Cardiac septum (tissue), 1 donor: ENCODE measurements at regions of chr3 and their contacts with region 1.

Region 1: GRCh38 chr3:52154117-52155094 is at the start of gene POC1A:
- DNase-seq: peak; percentile 97
- total RNA-seq, gene POC1A: 1.5 TPM

Region 2: DNA sequence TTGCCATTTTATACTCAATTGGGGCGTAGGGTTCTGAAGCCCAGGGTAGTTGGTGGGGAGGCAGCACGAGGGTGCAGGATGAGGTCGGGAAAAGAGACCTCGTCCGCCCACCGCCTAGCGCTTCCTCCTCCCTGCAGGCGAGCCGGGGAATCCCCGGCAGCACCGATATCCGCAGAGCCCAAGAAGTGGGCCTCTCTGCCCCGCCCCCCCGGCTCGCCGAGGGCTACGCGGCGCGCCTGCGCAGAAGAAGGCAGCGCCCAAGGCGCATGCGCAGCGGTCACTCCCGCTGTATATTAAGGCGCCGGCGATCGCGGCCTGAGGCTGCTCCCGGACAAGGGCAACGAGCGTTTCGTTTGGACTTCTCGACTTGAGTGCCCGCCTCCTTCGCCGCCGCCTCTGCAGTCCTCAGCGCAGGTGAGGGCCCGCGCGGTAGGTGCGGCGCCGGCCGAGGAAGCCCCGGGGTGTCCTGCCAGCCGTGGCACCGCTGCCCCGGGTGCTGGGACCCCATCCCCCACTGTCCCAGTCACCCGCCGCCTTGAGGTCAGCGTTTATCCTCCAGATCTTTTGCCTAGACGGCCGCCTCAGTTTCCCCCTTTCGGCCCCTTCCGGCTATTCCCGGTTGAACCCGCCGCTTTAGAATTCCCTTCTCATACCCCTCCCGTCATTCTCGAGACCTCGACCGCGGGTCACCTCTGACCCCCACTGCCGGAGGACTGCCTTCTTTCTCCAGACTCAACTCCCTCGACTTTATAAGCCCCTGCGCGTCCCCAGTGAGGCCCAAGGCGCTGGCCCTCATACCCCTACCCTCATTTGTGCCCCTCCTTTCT is 43.6 kb after region 1 on chr3 and contains the start of gene ALAS1:
- intact Hi-C with region 1: loop called (anchors 2 kb)
- DNase-seq: peak; percentile 96
- total RNA-seq, gene ALAS1: 154 TPM